SK-N-SH (cell line): ENCODE measurements at regions of chr2 and their contacts with region 1.

Region 1: DNA sequence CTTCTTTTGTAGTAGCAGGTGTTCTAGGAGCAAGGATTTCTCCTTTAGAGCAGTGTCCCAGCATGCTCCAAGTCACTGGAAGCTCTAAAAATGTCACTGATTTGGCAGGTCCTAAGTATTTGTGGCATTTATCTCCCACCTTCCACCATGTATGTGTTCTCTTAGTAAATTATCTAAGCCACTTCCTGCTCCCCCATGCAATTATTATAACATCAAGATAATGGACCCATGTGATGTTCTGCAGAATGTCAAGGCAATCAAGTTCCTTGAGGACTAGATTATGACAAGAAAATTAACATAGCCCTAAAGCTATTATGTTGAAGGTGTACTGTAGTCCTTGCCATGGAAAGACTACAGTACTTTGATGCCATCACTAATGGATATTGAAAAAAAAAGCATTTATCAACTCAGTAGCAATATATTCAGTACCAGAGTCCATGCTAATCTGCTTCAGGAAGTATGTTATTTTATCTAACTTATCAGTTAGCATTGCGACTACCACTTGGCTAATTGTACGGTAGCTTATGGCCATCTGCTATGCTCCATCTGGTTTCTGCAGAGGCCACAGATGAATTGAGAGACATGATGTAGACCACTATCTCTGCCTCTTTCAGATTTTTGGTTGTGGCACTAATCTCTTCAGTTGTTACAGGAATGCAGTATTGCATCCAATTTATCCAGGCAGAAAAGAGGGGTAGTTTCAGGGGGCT is 56.7 kb downstream of the GPR39 start:
- DNase-seq: peak; percentile 62
- H3K4me3 ChIP-seq: no peak overlapping the region
- H3K27ac ChIP-seq: peak overlapping the region in 1 of 2 experiments; percentile 74; a peak in 2 of 4 replicates
- H3K4me1 ChIP-seq: peaks cover 0 to 13% of the 10 kb centered on the region in 2 experiments; a peak in 2 of 4 replicates
- H3K27me3 ChIP-seq: no peaks in the 10 kb centered on the region
- CTCF ChIP-seq: no peak
- EP300 ChIP-seq: peak in 1 of 2 experiments; percentile 84; a peak in 2 of 4 replicates
- RAD21 ChIP-seq: no peak; the same call in 1 of the 2 replicates

Region 2: DNA sequence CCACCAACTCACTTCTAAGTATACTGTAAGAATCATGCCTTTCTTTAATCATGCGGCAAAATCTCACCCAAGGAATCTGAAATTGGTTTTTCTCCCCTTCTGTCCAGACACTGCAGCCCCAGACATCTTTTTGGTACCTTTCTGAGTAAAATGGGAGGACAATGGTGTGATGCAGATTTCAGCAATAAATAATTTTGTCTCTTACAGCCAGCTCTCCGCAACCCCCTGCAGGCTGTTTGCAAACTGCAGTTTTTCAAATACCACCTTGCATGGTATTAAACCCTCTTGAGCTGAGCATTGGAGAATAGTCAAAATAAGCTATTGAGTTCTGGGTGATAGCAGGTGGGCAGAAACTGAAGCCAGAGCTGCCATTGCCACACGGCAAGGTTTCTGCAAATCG is 24.6 kb before region 1 on chr2:
- CTCF ChIA-PET with region 1: interaction called, 17 read pairs
- POLR2A ChIA-PET with region 1: no interaction called
- DNase-seq: peak; percentile 37
- H3K4me3 ChIP-seq: peak overlapping the region in 1 of 2 experiments; percentile 22; a peak in 1 of 4 replicates
- H3K27ac ChIP-seq: no peak overlapping the region
- H3K4me1 ChIP-seq: no peaks in the 10 kb centered on the region
- H3K27me3 ChIP-seq: no peaks in the 10 kb centered on the region
- CTCF ChIP-seq: peak; percentile 71
- EP300 ChIP-seq: no peak
- RAD21 ChIP-seq: peak; percentile 74

Region 3: GRCh38 chr2:132489150-132489549 is 15.8 kb after region 1 on chr2:
- CTCF ChIA-PET with region 1: no interaction called
- POLR2A ChIA-PET with region 1: no interaction called
- DNase-seq: no peak
- H3K4me3 ChIP-seq: no peak overlapping the region
- H3K27ac ChIP-seq: no peak overlapping the region
- H3K4me1 ChIP-seq: no peaks in the 10 kb centered on the region
- H3K27me3 ChIP-seq: no peaks in the 10 kb centered on the region
- CTCF ChIP-seq: no peak
- EP300 ChIP-seq: no peak
- RAD21 ChIP-seq: no peak